Left lung (tissue), 14 donors: ENCODE measurements at regions of chr11 and their contacts with region 1.

Region 1: GRCh38 chr11:59171508-59172322 is at the start of gene DTX4:
- DNase-seq: peak; percentile 89 to 97 (median 96)
- ATAC-seq: peak; percentile 87
- H3K4me3 ChIP-seq: peak within 1 kb of the TSS; percentile 59 to 64
- H3K27ac ChIP-seq: peak within 1 kb of the TSS; percentile 75 to 81
- H3K4me1 ChIP-seq: peaks cover 0 to 29% of the 10 kb centered on the region in 2 donors
- H3K27me3 ChIP-seq: peaks cover 0 to 18% of the 10 kb centered on the region in 2 donors
- CTCF ChIP-seq: peak; percentile 76 to 92
- polyA plus RNA-seq, gene DTX4: 65.0 to 74.9 (median 70.0) TPM

Region 2: DNA sequence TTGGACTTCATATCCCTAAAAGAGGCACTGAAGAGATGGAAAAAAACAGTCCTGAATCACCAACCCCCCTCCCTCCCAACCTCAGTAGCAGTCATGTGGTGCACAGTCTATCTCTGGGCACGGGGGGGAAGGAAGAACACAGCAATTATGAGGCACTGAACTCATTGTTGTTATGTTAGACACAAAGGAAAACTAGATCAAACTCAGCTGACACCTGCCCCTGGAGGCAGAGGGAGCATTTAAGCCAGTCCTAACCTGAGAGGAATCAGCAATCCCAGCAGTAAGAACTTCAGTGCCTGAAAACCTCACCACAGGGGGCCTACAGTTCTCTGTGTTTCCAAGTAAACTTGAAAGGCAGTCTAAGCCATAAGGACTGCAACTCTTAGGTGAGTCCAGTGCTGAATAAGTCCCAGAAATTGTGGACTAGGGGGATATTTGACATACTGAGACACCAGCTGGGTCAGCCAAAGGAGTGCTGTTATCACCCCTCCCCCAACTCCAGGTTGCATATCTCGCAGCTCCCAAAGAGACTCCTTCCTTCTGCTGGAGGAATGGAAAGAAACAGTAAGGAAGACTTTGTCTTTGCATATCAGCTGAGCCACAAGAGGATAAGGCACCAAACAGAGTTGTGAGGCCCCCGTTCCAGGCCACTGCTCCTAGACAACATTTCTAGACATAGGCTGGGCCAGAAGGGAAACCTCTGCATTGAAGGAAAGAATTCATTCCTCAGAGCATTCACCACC is 159.9 kb before region 1 on chr11:
- intact Hi-C with region 1: no loop called
- DNase-seq: no peak
- ATAC-seq: peak; percentile 29
- H3K4me3 ChIP-seq: no peak overlapping the region
- H3K27ac ChIP-seq: no peak overlapping the region
- H3K4me1 ChIP-seq: no peaks in the 10 kb centered on the region
- H3K27me3 ChIP-seq: no peaks in the 10 kb centered on the region
- CTCF ChIP-seq: no peak

Region 3: GRCh38 chr11:59207988-59208451 is 36.3 kb after region 1 on chr11:
- intact Hi-C with region 1: loop called in 1 of 2 experiments (anchors 5 kb)
- DNase-seq: peak in 2 of 4 donors; percentile 45 to 75
- ATAC-seq: peak; percentile 77
- H3K4me3 ChIP-seq: peak overlapping the region in 1 of 2 donors; percentile 44
- H3K27ac ChIP-seq: peak overlapping the region; percentile 13 to 51
- H3K4me1 ChIP-seq: peaks cover 8 to 57% of the 10 kb centered on the region in 2 donors
- H3K27me3 ChIP-seq: no peaks in the 10 kb centered on the region
- CTCF ChIP-seq: peak; percentile 57

Region 4: DNA sequence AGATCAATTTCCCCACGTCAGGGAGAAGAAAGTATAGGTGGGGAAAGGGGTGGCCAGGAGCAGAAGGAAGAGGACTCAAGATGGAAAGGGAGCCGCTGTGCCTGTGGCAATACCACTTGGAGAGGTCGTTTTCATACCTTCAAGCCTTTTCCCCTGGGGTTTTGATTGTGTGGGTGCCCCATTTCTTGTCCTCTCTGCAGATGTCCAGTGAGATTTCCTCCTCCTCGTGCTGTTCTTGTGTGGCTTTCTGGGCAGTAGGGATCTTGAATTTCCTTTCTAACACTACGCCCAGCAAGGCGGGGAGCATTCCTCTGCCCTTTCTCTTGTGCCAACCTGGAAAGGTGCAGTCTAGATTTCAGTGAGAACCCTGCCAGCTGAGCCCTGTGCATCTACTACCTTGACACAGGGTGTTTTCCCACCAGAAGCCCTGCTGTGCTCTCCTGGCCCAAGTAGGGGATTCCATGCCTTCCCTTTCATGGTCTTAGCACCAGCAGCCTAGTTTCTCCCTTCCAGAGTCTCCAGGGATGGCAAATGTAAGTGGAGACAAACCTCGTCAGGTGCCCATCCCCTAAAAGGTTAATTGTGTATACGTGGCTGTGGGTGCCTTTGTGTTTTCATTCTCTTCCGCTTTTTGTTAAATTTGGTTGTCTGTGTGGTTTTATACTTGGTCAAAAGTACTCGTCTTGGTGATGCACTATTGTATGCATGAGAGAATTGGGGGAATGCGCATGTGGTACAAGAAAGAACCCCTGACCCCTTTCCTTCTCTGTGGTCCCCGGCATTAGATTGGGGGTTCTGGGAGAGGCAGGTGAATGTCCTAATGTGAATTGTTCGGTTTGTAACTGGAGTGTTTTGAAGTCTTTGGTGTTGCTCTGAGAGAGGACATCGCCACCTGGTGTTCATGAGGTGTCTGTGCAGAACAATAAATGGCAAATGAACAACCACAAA is 112.4 kb after region 1 on chr11:
- intact Hi-C with region 1: loop called in 1 of 2 experiments (anchors 2 kb)
- DNase-seq: peak in 2 of 4 donors; percentile 51 to 72
- ATAC-seq: peak; percentile 95
- H3K4me3 ChIP-seq: no peak overlapping the region
- H3K27ac ChIP-seq: no peak overlapping the region
- H3K4me1 ChIP-seq: peaks cover 0 to 12% of the 10 kb centered on the region in 2 donors
- H3K27me3 ChIP-seq: no peaks in the 10 kb centered on the region
- CTCF ChIP-seq: peak; percentile 76 to 79